ENCODE measurements at regions of chr15 and their contacts with region 1.

Region 1: DNA sequence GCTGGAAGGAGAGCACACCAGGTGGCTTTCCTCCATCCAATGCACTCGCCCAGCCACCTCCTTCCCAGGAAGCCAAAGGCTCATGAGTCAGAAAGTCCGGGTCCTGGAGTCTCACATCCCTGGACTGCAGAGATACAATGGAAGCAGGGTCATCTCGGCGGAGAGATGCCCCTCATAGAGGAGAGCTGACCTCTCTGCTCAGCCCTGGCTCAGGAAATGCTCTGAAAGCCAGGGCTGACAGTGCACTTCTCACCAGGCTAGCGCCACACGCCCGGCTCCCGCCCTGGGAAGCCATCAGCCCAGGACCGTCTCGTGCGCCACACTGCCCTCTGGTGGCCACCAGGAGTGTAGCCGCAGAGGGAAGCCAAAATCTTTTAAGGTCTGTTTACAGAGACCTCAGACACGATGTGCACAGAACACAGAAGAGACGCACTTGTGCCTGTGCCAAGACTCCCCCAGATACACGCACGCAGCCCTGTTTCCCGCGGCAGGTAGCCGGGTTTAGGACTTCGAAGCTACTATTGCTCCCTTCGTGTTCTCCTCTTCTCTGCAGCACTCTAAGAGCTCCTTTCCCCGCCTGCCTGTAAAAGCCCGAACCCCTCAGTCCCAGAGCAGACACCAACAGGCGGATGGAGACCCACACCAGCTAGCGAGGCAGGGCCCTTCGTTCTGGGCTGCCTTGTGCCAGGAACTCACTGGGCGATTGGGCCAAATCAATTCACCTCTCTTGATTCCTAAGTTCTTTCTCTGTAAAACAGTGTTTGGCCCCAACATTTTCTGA is 9.7 kb downstream of the NTRK3 start:
- DNase-seq: peak; percentile 84 to 94
- ATAC-seq: peak; percentile 91
- H3K4me3 ChIP-seq: no peak overlapping the region
- H3K27ac ChIP-seq: no peak overlapping the region
- H3K4me1 ChIP-seq: no peaks in the 10 kb centered on the region
- H3K27me3 ChIP-seq: no peaks in the 10 kb centered on the region

Region 2: GRCh38 chr15:87619161-87619960 is 627.5 kb before region 1 on chr15:
- intact Hi-C with region 1: loop called in 1 of 2 experiments (anchors 5 kb)
- DNase-seq: no peak
- ATAC-seq: peak; percentile 88
- H3K4me3 ChIP-seq: no peak overlapping the region
- H3K27ac ChIP-seq: peak overlapping the region; percentile 51 to 86
- H3K4me1 ChIP-seq: peaks cover 2 to 8% of the 10 kb centered on the region in 2 donors
- H3K27me3 ChIP-seq: no peaks in the 10 kb centered on the region

Region 3: DNA sequence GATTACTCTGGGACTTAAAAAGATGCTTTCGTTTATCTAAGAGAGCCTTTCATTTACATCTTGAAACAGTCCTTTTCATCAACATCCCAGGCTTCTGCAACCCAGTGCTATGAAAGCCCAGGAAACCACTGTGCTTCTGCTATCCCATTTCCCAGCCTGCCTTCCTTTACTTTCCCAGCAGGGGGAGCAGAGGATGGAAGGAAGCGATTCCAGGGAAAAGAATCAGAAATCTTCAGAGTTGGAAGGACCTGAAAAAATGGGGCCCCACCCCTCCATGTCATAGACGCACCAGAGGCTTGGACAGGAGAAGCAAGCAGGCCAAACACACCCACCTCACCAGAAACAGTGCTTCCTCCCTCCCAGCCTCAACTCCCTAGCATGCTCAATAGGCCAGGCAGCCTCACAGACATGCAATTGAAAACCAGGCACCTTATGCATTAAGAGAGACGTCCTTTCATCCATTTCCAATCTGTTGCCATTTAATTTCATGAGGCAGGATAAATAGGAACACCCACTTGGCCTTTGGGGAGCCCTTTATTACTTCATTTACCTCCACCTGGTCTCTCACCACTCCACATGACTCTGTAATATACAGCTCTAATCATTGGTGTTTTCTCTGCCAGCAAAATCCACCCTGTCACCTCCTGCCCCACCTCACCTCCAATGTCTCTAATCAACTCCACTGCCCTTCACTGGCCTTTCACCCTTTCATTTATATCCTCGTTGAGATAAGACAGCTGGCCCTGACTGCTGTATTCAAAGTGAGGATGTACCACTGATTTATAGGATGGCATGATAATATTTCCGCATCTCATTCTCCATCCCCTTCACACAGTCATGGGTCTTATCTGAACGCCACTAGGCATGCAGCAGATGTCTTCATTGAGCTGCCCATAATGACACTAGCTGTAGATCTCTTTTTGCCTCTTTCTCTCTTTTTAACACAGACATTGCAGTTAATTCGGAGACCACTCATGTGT is 574.3 kb before region 1 on chr15:
- intact Hi-C with region 1: loop called in 1 of 2 experiments (anchors 10 kb)
- DNase-seq: peak in 1 of 2 donors; percentile 50
- ATAC-seq: peak; percentile 62
- H3K4me3 ChIP-seq: no peak overlapping the region
- H3K27ac ChIP-seq: no peak overlapping the region
- H3K4me1 ChIP-seq: no peaks in the 10 kb centered on the region
- H3K27me3 ChIP-seq: no peaks in the 10 kb centered on the region

Region 4: DNA sequence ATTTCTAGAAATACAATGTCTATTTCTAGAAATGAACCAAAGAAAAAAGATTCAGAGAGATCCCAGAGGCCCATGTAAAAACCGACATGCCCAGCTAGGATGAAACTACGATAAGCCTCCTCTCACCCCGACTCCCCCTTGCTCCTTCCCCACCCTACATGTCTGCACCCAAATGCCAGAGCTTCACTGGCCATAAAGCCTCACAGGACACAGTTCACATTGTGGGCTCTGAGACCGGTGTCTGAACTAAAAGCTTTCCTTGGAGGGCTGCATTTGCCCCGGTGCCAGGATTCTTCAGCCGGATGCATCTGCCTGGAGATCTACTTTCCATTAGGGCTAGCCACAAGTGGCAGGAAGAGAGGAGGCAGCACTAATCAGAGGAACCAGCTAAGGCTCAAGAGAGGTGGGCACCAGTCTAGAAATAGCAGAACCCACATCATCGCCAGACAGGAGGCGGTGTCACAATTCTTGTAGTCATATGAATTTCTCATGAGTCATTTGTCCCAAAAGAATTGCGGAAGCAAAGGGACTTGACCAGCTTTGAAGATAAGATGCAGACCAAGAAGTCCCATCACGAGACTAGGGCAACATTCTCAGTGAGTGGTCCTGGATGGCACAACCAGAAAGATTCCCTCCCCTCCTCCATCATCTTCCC is 344.0 kb before region 1 on chr15:
- intact Hi-C with region 1: loop called (anchors 5 to 10 kb)
- DNase-seq: peak; percentile 80 to 84
- ATAC-seq: peak; percentile 87
- H3K4me3 ChIP-seq: no peak overlapping the region
- H3K27ac ChIP-seq: peak overlapping the region; percentile 22 to 73
- H3K4me1 ChIP-seq: no peaks in the 10 kb centered on the region
- H3K27me3 ChIP-seq: no peaks in the 10 kb centered on the region

Region 5: DNA sequence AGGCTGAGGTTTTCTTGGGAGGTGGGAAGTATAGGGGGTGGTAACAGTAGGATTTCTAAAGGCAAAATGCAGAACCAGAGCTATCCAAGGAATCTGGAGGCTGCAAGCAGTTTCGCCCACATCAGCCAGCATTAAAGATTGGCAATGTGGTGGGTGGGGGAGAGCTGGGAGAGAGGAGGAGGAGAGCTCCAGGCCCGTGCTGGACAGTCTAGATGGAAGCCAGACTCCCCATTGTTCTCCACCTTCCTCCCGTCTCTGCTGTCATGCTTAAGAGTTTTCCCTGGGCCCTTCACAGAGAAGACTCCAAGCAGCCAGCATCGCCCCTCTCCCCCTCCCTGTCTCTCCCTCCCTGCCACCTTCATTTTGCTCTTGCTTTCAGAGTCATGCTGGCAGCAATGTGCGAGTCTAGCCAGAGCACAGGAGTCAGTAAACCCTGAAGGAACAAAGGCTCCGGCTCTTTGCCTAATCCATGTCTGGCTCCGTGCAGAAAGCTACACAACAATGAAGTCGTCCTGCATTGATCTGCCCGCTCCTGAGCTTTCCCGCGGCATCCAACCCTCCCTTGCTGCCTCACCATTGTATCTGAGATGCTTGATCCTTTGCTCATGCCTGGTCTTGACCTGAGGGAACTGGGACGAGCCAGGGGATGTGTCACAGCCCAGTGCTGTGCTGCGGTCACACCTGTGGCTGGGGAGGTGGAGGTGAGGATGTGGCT is 273.2 kb before region 1 on chr15:
- intact Hi-C with region 1: loop called in 1 of 2 experiments (anchors 5 kb)
- DNase-seq: no peak
- ATAC-seq: no peak
- H3K4me3 ChIP-seq: no peak overlapping the region
- H3K27ac ChIP-seq: peak overlapping the region in 1 of 2 donors; percentile 19
- H3K4me1 ChIP-seq: peaks cover 6 to 9% of the 10 kb centered on the region in 2 donors
- H3K27me3 ChIP-seq: no peaks in the 10 kb centered on the region

Region 6: DNA sequence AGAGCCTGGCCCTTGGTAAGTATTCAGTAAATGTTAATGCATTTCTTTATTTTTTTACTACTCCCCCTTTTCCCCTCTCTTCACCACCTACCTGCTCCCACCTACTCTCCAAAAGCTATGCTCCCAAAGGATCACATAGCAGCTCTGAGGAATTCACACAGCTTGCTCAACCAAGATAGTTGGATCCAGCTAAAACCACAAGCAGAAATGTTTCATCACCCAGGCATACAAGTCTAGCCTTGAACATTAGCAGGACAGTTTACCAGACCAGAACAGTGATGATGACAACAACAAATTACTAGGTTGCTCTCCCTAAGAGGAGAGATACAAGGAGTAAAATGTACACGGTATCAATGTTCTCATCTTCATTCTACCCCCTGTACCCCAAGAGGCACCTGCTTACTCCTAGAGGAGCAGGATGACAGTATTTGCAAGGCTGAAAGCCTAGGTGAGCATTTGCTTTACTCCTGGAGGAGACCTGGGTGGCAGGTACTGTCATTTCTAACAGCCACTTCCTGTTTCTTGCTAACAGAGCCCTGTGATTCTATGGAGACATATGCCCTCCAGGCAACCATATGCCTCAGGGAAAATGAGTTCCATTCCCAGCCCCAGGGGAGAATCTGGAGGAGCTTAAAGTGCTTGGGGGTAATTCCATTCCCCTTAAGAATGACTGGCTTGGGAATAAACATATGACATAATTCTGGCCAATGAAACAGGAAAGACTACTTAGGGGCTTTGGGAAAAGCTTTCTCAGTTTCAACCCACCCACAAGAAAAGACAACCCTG is 227.8 kb before region 1 on chr15:
- intact Hi-C with region 1: loop called in 1 of 2 experiments (anchors 5 kb)
- DNase-seq: no peak
- ATAC-seq: no peak
- H3K4me3 ChIP-seq: no peak overlapping the region
- H3K27ac ChIP-seq: no peak overlapping the region
- H3K4me1 ChIP-seq: peaks cover 3% of the 10 kb centered on the region in 2 donors
- H3K27me3 ChIP-seq: no peaks in the 10 kb centered on the region

Region 7: GRCh38 chr15:88077296-88078020 is 169.4 kb before region 1 on chr15:
- intact Hi-C with region 1: loop called in 1 of 2 experiments (anchors 5 kb)
- DNase-seq: peak in 1 of 2 donors; percentile 71
- ATAC-seq: peak; percentile 45
- H3K4me3 ChIP-seq: no peak overlapping the region
- H3K27ac ChIP-seq: peak overlapping the region; percentile 73 to 87
- H3K4me1 ChIP-seq: peaks cover 0 to 3% of the 10 kb centered on the region in 2 donors
- H3K27me3 ChIP-seq: no peaks in the 10 kb centered on the region

Region 8: DNA sequence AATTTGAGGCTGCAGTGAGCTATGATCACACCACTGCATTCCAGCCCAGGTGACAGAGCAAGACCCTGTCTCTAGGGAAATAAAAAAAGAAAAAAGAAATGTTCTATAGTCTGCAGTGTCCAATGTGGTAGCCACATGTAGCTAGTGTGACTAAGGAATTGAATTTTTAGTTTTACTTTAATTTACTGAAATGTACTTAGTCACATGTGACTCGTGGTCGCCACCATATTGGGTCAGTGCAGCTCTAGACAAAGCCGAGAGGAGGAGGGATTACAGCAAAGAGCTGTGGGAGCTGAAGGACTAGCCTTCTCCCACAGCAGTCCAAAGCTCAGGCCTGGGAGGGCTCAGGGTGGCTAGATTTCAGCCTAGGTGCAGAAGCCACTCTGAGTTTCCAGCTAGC is 75.6 kb after region 1 on chr15:
- intact Hi-C with region 1: no loop called
- DNase-seq: no peak
- ATAC-seq: no peak
- H3K4me3 ChIP-seq: no peak overlapping the region
- H3K27ac ChIP-seq: no peak overlapping the region
- H3K4me1 ChIP-seq: no peaks in the 10 kb centered on the region
- H3K27me3 ChIP-seq: no peaks in the 10 kb centered on the region

Measured in aorta (tissue), 5 donors.